ENCODE measurements at regions of chr4 and their contacts with region 1.

Region 1: DNA sequence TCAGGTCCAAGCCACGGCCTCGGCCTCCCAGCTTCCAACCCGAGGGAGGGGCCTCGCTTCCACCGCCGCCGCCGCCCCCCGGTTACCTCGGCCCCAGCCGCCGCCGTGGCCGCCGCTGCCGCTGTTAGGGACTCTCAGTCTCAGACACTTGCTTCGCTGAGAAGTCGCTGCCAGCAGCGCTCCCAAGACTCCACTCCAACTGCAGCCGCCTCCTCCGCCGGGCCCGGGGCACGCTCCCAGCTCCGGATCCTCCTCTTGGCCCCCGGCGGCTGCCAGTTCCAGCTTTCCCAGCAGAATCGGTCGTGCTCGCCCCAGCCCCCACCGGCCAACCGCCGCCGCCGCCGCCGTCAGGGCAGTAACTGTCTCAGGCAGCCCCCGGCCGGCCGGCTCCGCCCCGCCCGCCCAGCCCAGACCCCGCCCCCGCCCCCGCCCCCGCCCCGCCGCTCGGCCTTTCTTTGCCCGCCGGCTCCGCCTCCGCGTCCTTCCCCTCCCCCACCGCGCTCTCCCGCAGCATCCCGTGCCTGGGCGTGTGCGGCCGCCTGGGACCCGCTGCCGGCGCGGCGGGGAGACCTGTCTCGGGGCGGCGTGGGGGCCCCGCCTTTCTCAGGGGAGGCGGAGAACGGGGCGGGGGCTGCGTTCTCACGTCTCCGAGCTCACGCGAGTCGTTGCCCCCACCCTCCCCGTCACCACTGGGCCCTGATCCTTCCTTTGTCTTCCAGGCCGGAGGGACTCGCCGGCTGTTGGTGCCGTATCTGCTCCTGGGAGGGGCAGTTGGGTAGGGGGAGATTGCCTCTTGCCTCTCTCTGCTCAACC is at the start of gene ANKRD50:
- DNase-seq: peak; percentile 96
- H3K4me3 ChIP-seq: peak within 1 kb of the TSS; percentile 62 to 97 (median 78)
- H3K27ac ChIP-seq: peak within 1 kb of the TSS; percentile 98
- H3K4me1 ChIP-seq: peaks cover 25% of the 10 kb centered on the region
- H3K27me3 ChIP-seq: no peaks in the 10 kb centered on the region
- CTCF ChIP-seq: no peak
- POLR2A ChIP-seq: peak; percentile 68
- total RNA-seq, gene ANKRD50: 63.6 and 68.9 TPM in 2 replicates

Region 2: DNA sequence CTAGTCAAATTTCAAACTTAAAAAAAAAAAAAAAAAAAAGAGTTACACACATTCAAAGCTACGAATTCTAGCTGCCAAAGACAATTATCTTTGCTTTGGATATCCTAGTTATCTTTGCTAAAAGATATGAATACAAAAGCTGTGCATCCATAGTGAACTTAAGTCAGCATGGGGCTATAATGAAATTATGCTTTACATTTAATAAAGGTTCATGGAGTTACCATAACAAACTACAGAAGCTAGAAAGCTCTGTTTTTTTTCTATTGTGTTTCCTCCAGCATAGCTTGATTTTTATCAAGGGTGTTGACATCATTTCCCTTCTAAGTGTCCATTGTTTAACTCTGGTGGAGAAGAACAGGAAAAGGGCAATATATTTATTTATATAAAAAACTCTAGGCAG is 234.1 kb before region 1 on chr4:
- CTCF ChIA-PET with region 1: no interaction called
- POLR2A ChIA-PET with region 1: interaction called, 5 read pairs
- dilution Hi-C with region 1: no loop called
- intact Hi-C with region 1: loop called (anchors 1 kb)
- DNase-seq: peak; percentile 89
- H3K4me3 ChIP-seq: no peak overlapping the region
- H3K27ac ChIP-seq: peak overlapping the region; percentile 87
- H3K4me1 ChIP-seq: peaks cover 30% of the 10 kb centered on the region
- H3K27me3 ChIP-seq: no peaks in the 10 kb centered on the region
- CTCF ChIP-seq: no peak
- POLR2A ChIP-seq: no peak

Region 3: DNA sequence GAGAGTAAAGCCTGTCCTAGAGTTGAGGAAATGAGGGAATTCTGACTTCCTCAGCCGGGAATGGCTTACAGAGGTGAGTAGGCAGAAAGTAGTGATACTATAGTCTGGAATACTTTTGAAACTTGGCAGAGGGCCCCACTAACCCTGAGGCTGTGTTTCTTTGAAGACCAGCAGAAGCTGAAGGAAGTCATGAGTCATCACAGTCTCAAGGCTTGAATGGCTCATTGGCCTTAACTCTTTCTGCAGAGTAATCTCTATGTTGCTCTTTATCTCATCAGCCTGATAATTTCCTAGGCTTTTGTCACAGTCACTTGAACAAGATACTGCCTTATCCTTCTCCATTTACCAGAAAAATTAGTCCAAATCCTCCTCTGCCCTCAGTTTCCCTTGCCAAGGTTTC is 80.8 kb before region 1 on chr4:
- CTCF ChIA-PET with region 1: no interaction called
- POLR2A ChIA-PET with region 1: no interaction called
- dilution Hi-C with region 1: no loop called
- intact Hi-C with region 1: loop called (anchors 5 kb)
- DNase-seq: peak; percentile 98
- H3K4me3 ChIP-seq: no peak overlapping the region
- H3K27ac ChIP-seq: peak overlapping the region; percentile 70
- H3K4me1 ChIP-seq: peaks cover 29% of the 10 kb centered on the region
- H3K27me3 ChIP-seq: no peaks in the 10 kb centered on the region
- CTCF ChIP-seq: no peak
- POLR2A ChIP-seq: no peak

Region 4: GRCh38 chr4:124753941-124754581 is 41.5 kb after region 1 on chr4:
- CTCF ChIA-PET with region 1: no interaction called
- POLR2A ChIA-PET with region 1: no interaction called
- dilution Hi-C with region 1: no loop called
- intact Hi-C with region 1: no loop called
- DNase-seq: no peak
- H3K4me3 ChIP-seq: no peak overlapping the region
- H3K27ac ChIP-seq: no peak overlapping the region
- H3K4me1 ChIP-seq: no peaks in the 10 kb centered on the region
- H3K27me3 ChIP-seq: no peaks in the 10 kb centered on the region
- CTCF ChIP-seq: no peak
- POLR2A ChIP-seq: no peak

Region 5: GRCh38 chr4:124948976-124949597 is 236.5 kb after region 1 on chr4:
- CTCF ChIA-PET with region 1: no interaction called
- POLR2A ChIA-PET with region 1: no interaction called
- dilution Hi-C with region 1: no loop called
- intact Hi-C with region 1: loop called (anchors 2 kb)
- DNase-seq: peak; percentile 80
- H3K4me3 ChIP-seq: no peak overlapping the region
- H3K27ac ChIP-seq: peak overlapping the region; percentile 99
- H3K4me1 ChIP-seq: peaks cover 51% of the 10 kb centered on the region
- H3K27me3 ChIP-seq: no peaks in the 10 kb centered on the region
- CTCF ChIP-seq: no peak
- POLR2A ChIP-seq: no peak

Region 6: GRCh38 chr4:125244848-125245450 is 532.4 kb after region 1 on chr4:
- CTCF ChIA-PET with region 1: interaction called, 8 read pairs
- POLR2A ChIA-PET with region 1: no interaction called
- dilution Hi-C with region 1: no loop called
- intact Hi-C with region 1: loop called (anchors 1 kb)
- DNase-seq: peak; percentile 59
- H3K4me3 ChIP-seq: no peak overlapping the region
- H3K27ac ChIP-seq: no peak overlapping the region
- H3K4me1 ChIP-seq: peaks cover 11% of the 10 kb centered on the region
- H3K27me3 ChIP-seq: no peaks in the 10 kb centered on the region
- CTCF ChIP-seq: peak in 1 of 2 donors; percentile 20
- POLR2A ChIP-seq: no peak